Mammary epithelial cell (primary cell): ENCODE measurements at regions of chr12 and their contacts with region 1.

Region 1: GRCh38 chr12:132414634-132415326 is 75.2 kb upstream of the FBRSL1 start:
- DNase-seq: peak; percentile 57
- H3K4me3 ChIP-seq: no peak overlapping the region
- H3K27ac ChIP-seq: no peak overlapping the region
- H3K4me1 ChIP-seq: no peaks in the 10 kb centered on the region
- H3K27me3 ChIP-seq: peaks cover 3% of the 10 kb centered on the region
- CTCF ChIP-seq: peak; percentile 58 to 97

Region 2: GRCh38 chr12:132153501-132154340 is 261.1 kb before region 1 on chr12:
- CTCF ChIA-PET with region 1: interaction called, 7 read pairs
- dilution Hi-C with region 1: no loop called
- in situ Hi-C with region 1: no loop called
- intact Hi-C with region 1: loop called (anchors 1 kb)
- DNase-seq: peak; percentile 39
- H3K4me3 ChIP-seq: no peak overlapping the region
- H3K27ac ChIP-seq: no peak overlapping the region
- H3K4me1 ChIP-seq: peaks cover under 1% of the 10 kb centered on the region
- H3K27me3 ChIP-seq: no peaks in the 10 kb centered on the region
- CTCF ChIP-seq: peak; percentile 85 to 98

Region 3: DNA sequence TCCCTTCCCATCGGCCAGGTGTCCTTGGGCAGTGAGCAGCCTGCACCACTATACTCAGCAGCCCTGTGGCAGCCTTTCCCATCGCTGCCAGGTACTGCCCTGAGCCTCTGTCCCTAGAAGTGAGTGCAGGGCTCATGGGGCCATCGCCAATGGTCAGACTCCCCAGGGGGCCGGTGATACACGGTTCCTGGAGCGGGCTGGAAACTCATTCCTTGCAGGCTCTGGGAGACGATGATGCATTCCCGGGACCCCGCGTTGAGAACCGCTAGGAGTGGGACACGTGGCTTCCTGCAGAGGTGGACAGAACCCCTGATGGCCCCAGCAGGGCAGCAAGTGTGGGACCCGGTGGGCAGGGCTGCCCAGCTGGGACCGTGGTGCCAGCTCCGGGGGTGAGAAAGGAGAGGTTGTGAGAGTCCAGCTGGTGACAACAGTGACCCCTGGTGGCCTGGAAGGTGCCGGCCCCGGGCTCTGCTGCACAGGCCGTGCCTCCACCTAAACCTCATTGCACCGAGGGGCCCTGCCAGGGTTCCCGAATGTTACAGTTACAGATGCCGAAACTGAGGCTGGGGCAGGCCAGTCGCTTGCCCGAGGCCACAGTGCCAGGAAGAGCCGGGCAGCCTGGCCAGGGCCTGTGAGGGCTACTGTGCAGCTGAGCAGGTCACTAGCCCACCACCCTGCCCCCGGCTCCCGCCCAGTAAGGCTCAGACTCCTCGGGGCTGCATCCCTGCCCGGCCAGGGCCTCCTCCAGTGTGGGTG is 109.0 kb after region 1 on chr12:
- CTCF ChIA-PET with region 1: no interaction called
- dilution Hi-C with region 1: no loop called
- in situ Hi-C with region 1: loop called in 1 of 2 experiments (anchors 5 kb)
- intact Hi-C with region 1: loop called (anchors 1 kb)
- DNase-seq: peak; percentile 14
- H3K4me3 ChIP-seq: no peak overlapping the region
- H3K27ac ChIP-seq: no peak overlapping the region
- H3K4me1 ChIP-seq: peaks cover 23% of the 10 kb centered on the region
- H3K27me3 ChIP-seq: no peaks in the 10 kb centered on the region
- CTCF ChIP-seq: peak; percentile 50 to 66

Region 4: DNA sequence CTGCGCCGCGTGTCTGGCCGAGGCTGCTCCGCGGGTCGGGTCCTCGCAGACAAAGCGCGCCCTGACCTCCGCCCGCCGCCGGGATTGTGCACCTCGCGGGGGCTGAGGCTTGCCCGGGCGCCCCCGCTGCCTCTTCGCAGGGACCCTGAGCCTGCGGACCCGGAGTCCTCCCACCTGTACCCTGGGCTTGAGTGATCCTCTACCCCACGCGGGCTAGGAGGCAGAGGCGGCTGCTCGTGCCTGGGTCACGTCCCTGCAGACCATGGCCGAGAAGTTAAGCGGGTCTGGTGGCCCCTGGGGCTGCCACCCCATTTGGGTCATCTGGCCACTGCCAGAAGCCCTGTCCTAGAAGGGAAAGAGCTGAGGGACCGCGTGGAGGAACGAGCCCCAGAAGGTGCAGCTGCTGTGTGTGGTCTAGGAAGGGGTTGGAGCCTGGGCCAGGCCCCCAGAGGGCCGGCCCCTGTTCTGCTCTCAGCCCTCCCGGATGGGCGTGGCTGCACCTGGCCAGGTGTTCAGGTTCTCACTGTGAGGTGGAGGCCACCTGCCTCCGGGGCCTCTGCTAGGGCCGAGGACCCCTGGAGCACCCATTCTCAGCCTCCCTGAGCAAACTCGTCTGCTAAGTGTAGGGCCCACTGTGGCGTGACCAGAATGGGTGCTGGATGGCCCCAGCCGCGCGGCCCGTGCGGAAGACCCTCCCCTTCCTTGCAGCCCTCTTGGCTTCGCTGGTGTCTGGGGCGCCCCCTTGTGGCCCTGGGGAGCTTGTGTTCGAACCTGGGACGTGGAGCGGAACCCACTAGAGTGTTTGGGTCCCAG is 146.0 kb after region 1 on chr12:
- CTCF ChIA-PET with region 1: no interaction called
- dilution Hi-C with region 1: no loop called
- in situ Hi-C with region 1: loop called in 1 of 2 experiments (anchors 5 kb)
- intact Hi-C with region 1: loop called (anchors 1 kb)
- DNase-seq: peak; percentile 52
- H3K4me3 ChIP-seq: peak overlapping the region; percentile 42 to 66 (median 63)
- H3K27ac ChIP-seq: no peak overlapping the region
- H3K4me1 ChIP-seq: peaks cover 12% of the 10 kb centered on the region
- H3K27me3 ChIP-seq: no peaks in the 10 kb centered on the region
- CTCF ChIP-seq: peak; percentile 44 to 75

Region 5: DNA sequence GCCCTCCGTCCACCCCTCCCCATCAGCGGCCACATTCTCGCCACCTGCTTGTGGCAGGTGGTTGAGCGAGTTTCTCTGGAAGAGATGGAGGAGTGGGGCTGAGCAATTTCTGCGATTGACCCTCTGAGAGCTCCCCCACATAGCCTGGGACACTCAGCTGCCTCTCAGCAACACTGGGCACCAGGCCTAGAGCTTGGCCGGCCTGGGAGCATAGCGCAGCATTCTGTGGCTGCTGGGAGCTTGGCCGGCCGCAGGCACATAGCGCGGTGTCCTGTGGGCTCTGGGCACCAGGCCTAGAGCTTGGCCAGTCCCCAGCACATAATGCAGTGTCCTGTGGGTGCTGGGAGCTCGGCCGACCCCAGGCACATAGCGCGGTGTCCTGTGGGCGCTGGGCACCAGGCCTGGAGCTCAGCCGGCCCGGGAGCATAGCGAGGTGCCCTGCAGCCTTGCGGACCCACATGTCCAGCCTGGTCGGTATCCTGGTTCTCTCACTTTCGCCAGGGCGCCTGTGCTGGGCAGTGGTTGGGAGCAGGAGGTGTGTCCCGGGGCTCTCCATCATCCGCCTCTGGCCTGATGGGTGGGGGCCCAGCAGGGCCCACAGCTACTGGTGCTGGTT is 151.8 kb after region 1 on chr12:
- CTCF ChIA-PET with region 1: no interaction called
- dilution Hi-C with region 1: no loop called
- in situ Hi-C with region 1: loop called in 1 of 2 experiments (anchors 5 kb)
- intact Hi-C with region 1: loop called (anchors 1 kb)
- DNase-seq: no peak
- H3K4me3 ChIP-seq: no peak overlapping the region
- H3K27ac ChIP-seq: no peak overlapping the region
- H3K4me1 ChIP-seq: peaks cover under 1% of the 10 kb centered on the region
- H3K27me3 ChIP-seq: no peaks in the 10 kb centered on the region
- CTCF ChIP-seq: no peak

Region 6: GRCh38 chr12:132638541-132639418 is 224.0 kb after region 1 on chr12:
- CTCF ChIA-PET with region 1: no interaction called
- dilution Hi-C with region 1: no loop called
- in situ Hi-C with region 1: no loop called
- intact Hi-C with region 1: loop called (anchors 1 kb)
- DNase-seq: peak; percentile 26
- H3K4me3 ChIP-seq: no peak overlapping the region
- H3K27ac ChIP-seq: no peak overlapping the region
- H3K4me1 ChIP-seq: no peaks in the 10 kb centered on the region
- H3K27me3 ChIP-seq: no peaks in the 10 kb centered on the region
- CTCF ChIP-seq: peak; percentile 88 to 89